H1 (cell line): ENCODE measurements at regions of chr3 and their contacts with region 1.

Region 1: GRCh38 chr3:31895471-31895870 is 85.6 kb downstream of the OSBPL10 start:
- DNase-seq: no peak
- H3K4me3 ChIP-seq: no peak overlapping the region
- H3K27ac ChIP-seq: no peak overlapping the region
- H3K4me1 ChIP-seq: peaks cover 10 to 36% (median 24%) of the 10 kb centered on the region in 4 experiments
- H3K27me3 ChIP-seq: no peaks in the 10 kb centered on the region
- CTCF ChIP-seq: no peak
- EP300 ChIP-seq: no peak
- POLR2A ChIP-seq: no peak
- RAD21 ChIP-seq: no peak

Region 2: GRCh38 chr3:31724661-31725060 is 170.8 kb before region 1 on chr3:
- CTCF ChIA-PET with region 1: no interaction called
- POLR2A ChIA-PET with region 1: no interaction called
- DNase-seq: no peak
- H3K4me3 ChIP-seq: peak overlapping the region in 1 of 4 experiments; percentile 14; a peak in 1 of 8 replicates
- H3K27ac ChIP-seq: no peak overlapping the region
- H3K4me1 ChIP-seq: peaks cover 0 to 9% (median 2%) of the 10 kb centered on the region in 4 experiments; a peak in 3 of 7 replicates
- H3K27me3 ChIP-seq: no peaks in the 10 kb centered on the region
- CTCF ChIP-seq: peak in 2 of 3 experiments; percentile 12 to 61; a peak in 2 of 4 replicates
- EP300 ChIP-seq: no peak
- POLR2A ChIP-seq: no peak
- RAD21 ChIP-seq: peak; percentile 68 to 70

Region 3: DNA sequence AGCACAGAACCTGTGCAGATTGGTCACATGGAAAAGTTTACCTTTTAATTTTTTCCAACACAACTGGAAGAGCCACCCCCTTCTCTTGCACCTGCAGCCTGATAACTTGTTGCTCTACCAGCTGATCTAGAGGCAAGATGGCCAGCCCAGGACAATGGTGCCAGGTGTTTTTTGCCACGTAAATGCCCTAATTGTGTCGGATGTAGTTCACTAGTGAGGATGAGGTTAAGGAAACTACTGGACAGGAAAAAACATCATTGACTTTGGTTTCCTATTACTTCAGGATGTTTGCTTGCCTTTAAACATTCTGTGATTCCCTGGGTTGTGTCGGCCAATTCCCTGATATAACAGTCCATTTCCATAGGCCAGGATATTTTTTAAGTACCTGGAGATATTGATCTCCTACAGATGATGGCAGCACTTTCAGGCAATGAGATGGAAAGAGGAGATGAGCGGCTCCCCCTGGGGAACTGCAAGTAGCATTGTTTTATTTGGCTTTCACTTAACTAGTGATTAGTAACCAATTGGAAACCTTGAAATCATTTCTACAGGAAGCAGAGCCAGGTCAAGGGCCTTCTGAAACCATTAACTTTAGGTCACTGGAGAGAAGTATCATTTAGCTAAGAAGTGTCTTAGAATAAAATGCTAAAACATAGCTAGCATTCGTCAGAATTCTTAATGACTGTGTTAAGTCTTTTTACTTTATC is 13.1 kb after region 1 on chr3:
- CTCF ChIA-PET with region 1: interaction called, 40 read pairs
- POLR2A ChIA-PET with region 1: interaction called, 5 read pairs
- DNase-seq: no peak
- H3K4me3 ChIP-seq: no peak overlapping the region
- H3K27ac ChIP-seq: no peak overlapping the region
- H3K4me1 ChIP-seq: peaks cover 0 to 17% (median 9%) of the 10 kb centered on the region in 4 experiments; a peak in 4 of 7 replicates
- H3K27me3 ChIP-seq: no peaks in the 10 kb centered on the region
- CTCF ChIP-seq: peak in 1 of 3 experiments; percentile 54; a peak in 2 of 4 replicates
- EP300 ChIP-seq: no peak
- POLR2A ChIP-seq: no peak
- RAD21 ChIP-seq: peak in 1 of 2 experiments; percentile 42; a peak in 2 of 4 replicates